ENCODE measurements at regions of chr20 and their contacts with region 1.

Region 1: GRCh38 chr20:47464380-47465101 is 37.1 kb upstream of the NCOA3 start:
- DNase-seq: peak; percentile 100
- ATAC-seq: peak; percentile 99
- H3K4me3 ChIP-seq: peak overlapping the region in 1 of 3 experiments; percentile 8; a peak in 2 of 6 replicates
- H3K27ac ChIP-seq: peak overlapping the region; percentile 19
- H3K4me1 ChIP-seq: peaks cover 76% of the 10 kb centered on the region
- H3K27me3 ChIP-seq: no peaks in the 10 kb centered on the region
- CTCF ChIP-seq: peak; percentile 66
- EP300 ChIP-seq: peak; percentile 98
- POLR2A ChIP-seq: peak in 1 of 2 experiments; percentile 48; a peak in 1 of 4 replicates
- RAD21 ChIP-seq: peak; percentile 74

Region 2: GRCh38 chr20:47493175-47493962 is 28.8 kb after region 1 on chr20:
- CTCF ChIA-PET with region 1: no interaction called
- POLR2A ChIA-PET with region 1: interaction called, 12 read pairs
- in situ Hi-C with region 1: no loop called
- intact Hi-C with region 1: no loop called
- DNase-seq: peak; percentile 93
- ATAC-seq: peak; percentile 92
- H3K4me3 ChIP-seq: peak overlapping the region; percentile 2 to 47 (median 6); a peak in 2 of 6 replicates
- H3K27ac ChIP-seq: peak overlapping the region; percentile 66
- H3K4me1 ChIP-seq: peaks cover 44% of the 10 kb centered on the region
- H3K27me3 ChIP-seq: no peaks in the 10 kb centered on the region
- CTCF ChIP-seq: no peak
- EP300 ChIP-seq: peak; percentile 15 to 84; a peak in 2 of 4 replicates
- POLR2A ChIP-seq: peak; percentile 40 to 51; a peak in 1 of 4 replicates
- RAD21 ChIP-seq: no peak

Region 3: GRCh38 chr20:47521059-47521808 is 56.7 kb after region 1 on chr20:
- CTCF ChIA-PET with region 1: no interaction called
- POLR2A ChIA-PET with region 1: no interaction called
- in situ Hi-C with region 1: no loop called
- intact Hi-C with region 1: no loop called
- DNase-seq: no peak
- ATAC-seq: peak; percentile 67
- H3K4me3 ChIP-seq: no peak overlapping the region
- H3K27ac ChIP-seq: no peak overlapping the region
- H3K4me1 ChIP-seq: 0 out of 2 replicates have a peak, but pooled peaks cover 7% of the 10 kb centered on the region
- H3K27me3 ChIP-seq: no peaks in the 10 kb centered on the region
- CTCF ChIP-seq: peak; percentile 77
- EP300 ChIP-seq: no peak
- POLR2A ChIP-seq: no peak
- RAD21 ChIP-seq: peak; percentile 62

Region 4: DNA sequence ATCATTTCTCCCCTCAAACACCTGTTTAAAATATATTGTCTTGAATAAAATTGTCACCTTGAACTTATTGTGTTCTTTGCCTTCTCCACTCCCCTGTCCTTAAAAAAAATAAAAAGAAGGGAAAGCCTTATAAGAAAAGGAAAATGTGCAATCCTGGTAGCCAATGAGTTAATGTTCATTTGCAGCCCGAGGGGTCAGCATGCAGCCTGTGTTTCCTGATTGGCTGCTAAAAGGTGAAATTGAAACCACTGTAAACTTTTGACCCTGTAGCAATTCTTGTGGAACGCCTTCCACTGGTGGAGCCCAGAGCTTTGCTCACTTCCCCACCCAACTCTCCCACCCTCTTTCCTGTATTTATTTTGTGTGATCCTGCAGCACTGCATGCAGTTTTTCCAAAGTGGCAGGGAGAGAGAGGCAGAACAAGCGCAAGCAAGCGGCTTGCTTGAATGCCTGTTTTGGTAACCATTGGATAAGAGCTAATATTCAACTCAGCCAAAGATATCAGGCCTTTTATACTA is 112.0 kb after region 1 on chr20:
- CTCF ChIA-PET with region 1: no interaction called
- POLR2A ChIA-PET with region 1: no interaction called
- in situ Hi-C with region 1: no loop called
- intact Hi-C with region 1: loop called (anchors 5 kb)
- DNase-seq: peak; percentile 97
- ATAC-seq: peak; percentile 98
- H3K4me3 ChIP-seq: peak overlapping the region; percentile 22 to 49 (median 44); a peak in 4 of 6 replicates
- H3K27ac ChIP-seq: peak overlapping the region; percentile 51
- H3K4me1 ChIP-seq: peaks cover 97% of the 10 kb centered on the region
- H3K27me3 ChIP-seq: no peaks in the 10 kb centered on the region
- CTCF ChIP-seq: peak; percentile 31
- EP300 ChIP-seq: peak; percentile 70 to 72
- POLR2A ChIP-seq: peak; percentile 41 to 48; a peak in 2 of 4 replicates
- RAD21 ChIP-seq: no peak

Measured in HepG2 (cell line).